GM10248 (cell line): ENCODE measurements at regions of chr16 and their contacts with region 1.

Region 1: GRCh38 chr16:53904533-53904932 is 200.6 kb downstream of the FTO start:
- DNase-seq: no peak
- CTCF ChIP-seq: no peak

Region 2: GRCh38 chr16:53892155-53892554 is 12.4 kb before region 1 on chr16:
- CTCF ChIA-PET with region 1: interaction called, 16 read pairs
- POLR2A ChIA-PET with region 1: no interaction called
- DNase-seq: peak; percentile 23
- CTCF ChIP-seq: peak; percentile 65